BJ (cell line): ENCODE measurements at regions of chr2 and their contacts with region 1.

Region 1: GRCh38 chr2:120343433-120344105 is 2.4 kb upstream of the INHBB start:
- DNase-seq: no peak
- H3K4me3 ChIP-seq: no peak overlapping the region
- H3K27me3 ChIP-seq: peaks cover 30% of the 10 kb centered on the region
- CTCF ChIP-seq: peak; percentile 83

Region 2: DNA sequence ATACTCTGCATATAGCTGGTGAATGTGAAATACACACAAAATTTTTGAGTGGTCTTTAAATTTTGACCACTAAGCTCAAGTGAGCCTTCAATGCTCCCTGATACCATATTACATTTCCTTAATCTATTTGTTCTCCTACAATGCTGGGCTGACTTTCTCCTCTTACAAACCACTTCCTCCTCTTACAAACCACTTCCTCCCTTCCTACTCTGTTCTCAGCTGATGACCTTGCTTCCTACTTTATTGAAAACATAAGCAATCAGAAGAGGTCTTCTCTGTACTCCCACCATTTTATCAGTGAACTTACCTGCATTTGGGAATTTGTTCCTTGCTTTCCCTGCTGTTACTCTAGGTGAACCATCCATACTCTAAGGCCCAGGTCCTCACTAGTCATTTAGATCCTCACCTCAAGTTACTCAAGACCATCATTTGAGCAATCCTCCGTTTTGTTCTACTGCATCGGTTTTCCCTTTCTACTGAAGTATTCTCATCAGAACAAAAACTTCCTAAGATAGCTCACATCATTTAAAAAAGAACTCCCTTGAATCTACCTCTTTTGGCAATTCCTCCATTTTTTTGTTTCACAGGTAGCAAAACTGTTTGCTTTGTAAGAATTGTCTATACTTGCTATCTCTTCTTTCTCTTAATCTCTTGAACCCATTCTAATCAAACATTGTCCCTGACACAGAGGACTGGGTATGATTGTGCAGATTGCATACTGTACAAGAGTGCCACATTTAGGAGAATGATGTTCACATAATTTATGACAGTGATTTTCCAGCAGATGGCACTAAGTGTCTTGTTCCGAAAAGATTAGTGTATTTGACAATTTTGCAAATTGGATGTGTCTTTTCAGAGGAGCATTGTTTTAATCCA is 234.1 kb before region 1 on chr2:
- CTCF ChIA-PET with region 1: no interaction called
- POLR2A ChIA-PET with region 1: no interaction called
- DNase-seq: no peak
- H3K4me3 ChIP-seq: no peak overlapping the region
- H3K27me3 ChIP-seq: no peaks in the 10 kb centered on the region
- CTCF ChIP-seq: no peak

Region 3: GRCh38 chr2:120436885-120437603 is 93.5 kb after region 1 on chr2:
- CTCF ChIA-PET with region 1: interaction called, 36 read pairs
- POLR2A ChIA-PET with region 1: no interaction called
- DNase-seq: no peak
- H3K4me3 ChIP-seq: no peak overlapping the region
- H3K27me3 ChIP-seq: peaks cover 6% of the 10 kb centered on the region
- CTCF ChIP-seq: peak; percentile 56

Region 4: DNA sequence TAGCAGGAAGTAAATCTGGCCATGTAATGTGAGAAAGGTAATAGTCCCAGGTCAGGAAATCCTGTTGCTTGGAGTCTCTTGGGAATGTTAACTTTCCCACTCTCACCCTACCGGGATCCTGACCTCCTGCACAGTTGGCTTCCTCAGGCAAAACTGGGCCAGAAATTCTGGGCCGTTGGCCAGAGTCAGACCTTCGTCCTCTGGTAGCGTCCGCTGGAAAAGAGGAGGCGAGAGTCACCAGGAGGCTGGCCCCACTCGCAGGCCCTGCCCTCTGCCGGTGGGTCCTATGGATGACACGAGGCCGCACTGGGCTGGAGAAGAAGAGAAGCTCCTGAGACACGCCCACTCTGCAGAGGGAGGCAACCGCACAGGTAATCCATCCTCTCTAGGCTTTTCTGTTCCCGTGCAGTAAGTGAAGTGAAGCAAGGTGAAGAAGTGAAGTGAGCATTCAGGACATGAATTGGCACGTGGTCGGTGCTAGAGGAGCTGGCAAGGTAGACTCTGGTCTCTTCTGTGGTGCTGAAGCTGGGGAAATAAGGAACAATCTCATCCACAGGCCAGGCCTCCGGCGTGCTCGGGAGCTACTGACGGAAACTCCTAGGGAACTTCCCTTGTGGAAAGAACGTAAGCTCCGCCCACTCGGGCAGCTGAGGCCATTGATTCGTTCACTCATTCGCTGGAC is 209.4 kb after region 1 on chr2:
- CTCF ChIA-PET with region 1: interaction called, 13 read pairs
- POLR2A ChIA-PET with region 1: interaction called, 32 read pairs
- DNase-seq: no peak
- H3K4me3 ChIP-seq: no peak overlapping the region
- H3K27me3 ChIP-seq: no peaks in the 10 kb centered on the region
- CTCF ChIP-seq: peak; percentile 46

Region 5: GRCh38 chr2:120669121-120669952 is 325.8 kb after region 1 on chr2:
- CTCF ChIA-PET with region 1: interaction called, 95 read pairs
- POLR2A ChIA-PET with region 1: no interaction called
- DNase-seq: no peak
- H3K4me3 ChIP-seq: no peak overlapping the region
- H3K27me3 ChIP-seq: no peaks in the 10 kb centered on the region
- CTCF ChIP-seq: peak; percentile 34; the same call in 1 of the 2 replicates